ENCODE measurements at regions of chr1 and their contacts with region 1.

Region 1: DNA sequence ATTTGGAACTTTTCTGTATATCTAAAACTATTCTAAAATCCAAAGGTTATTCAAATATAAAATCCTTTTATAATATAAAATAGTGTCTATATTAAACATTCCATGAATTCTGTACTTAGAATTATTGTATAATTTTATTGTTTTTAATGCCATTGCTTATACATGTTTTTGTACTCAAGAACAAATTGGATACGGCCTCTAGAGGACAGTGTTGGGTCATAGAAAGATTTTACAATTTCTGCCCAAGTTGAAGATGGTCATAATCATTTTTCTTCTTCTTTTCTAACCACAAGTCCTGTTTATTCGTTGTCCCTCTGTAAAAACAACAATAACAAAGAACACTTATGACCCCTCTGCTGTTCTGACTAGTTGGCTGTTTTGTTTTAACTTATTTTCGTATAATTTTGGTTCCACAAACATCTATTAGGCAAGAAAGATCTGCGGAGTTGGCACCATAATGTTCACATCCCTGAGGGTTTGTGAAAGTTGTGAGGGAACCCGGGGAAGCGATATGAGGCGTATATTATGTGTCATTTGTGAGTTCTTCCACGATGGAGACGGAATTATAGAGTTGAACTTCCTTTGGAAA is 75.7 kb upstream of the KIF26B start:
- DNase-seq: no peak
- ATAC-seq: no peak
- H3K4me3 Mint-ChIP-seq: no peak overlapping the region
- H3K27ac Mint-ChIP-seq: no peak overlapping the region
- H3K4me1 Mint-ChIP-seq: no peaks in the 10 kb centered on the region
- H3K27me3 Mint-ChIP-seq: no peaks in the 10 kb centered on the region
- CTCF ChIP-seq: no peak

Region 2: DNA sequence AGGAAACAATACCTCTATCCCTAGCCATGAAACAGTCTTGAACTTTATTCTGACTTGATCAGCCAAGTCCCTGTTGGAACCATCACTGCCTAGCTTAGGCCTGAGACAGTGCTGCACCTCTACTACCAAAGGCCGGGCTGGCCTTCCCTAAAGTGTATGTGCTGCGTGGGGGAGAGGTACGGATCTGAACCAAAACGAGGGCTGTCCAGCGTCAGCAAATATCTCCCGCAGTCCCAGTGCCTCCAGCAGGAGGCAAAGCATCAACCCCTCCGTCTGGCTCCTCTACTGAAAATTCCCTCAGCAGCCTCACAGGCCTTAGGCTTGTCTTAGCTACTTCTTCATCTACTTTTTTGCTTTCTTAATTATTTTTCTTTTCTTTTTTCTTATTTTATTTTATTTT is 42.4 kb after region 1 on chr1:
- CTCF ChIA-PET with region 1: no interaction called
- POLR2A ChIA-PET with region 1: no interaction called
- intact Hi-C with region 1: no loop called
- DNase-seq: no peak
- ATAC-seq: no peak
- H3K4me3 Mint-ChIP-seq: no peak overlapping the region
- H3K27ac Mint-ChIP-seq: no peak overlapping the region
- H3K4me1 Mint-ChIP-seq: no peaks in the 10 kb centered on the region
- H3K27me3 Mint-ChIP-seq: no peaks in the 10 kb centered on the region
- CTCF ChIP-seq: no peak

Region 3: DNA sequence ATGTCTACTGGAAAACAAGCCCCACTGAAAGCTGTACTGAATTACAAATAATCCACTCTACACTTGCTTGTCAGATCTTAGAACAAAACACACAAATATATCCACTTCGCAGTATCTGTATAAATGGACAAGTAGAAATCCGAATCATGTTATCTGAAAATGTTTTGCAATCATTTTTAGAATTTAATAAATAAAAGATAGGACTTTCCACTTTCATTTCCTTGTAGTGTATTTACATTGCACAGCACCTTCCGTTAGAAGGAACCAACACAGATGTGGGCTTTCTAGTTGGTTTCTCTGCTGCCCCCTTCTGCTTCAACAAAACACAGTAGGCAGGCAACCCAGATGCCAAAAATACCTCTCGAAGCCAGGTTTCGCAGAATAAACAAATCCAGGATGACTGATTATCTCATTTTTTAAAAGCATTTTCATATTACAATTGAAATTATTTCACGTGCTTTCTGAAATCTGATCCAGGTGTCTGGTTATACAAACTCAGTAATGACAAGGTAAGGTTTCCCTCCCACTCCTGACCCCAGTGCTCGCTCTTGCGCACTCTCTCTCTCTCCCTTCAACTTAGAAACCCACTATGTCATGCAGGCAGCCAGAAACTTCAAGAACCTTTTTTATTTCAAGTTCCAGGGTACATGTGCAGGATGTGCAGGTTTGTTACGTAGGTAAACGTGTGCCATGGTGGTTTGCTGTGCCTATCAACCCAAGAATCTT is 1038.1 kb after region 1 on chr1:
- CTCF ChIA-PET with region 1: no interaction called
- POLR2A ChIA-PET with region 1: no interaction called
- intact Hi-C with region 1: loop called (anchors 5 kb)
- DNase-seq: no peak
- ATAC-seq: peak; percentile 89
- H3K4me3 Mint-ChIP-seq: peak overlapping the region; percentile 38
- H3K27ac Mint-ChIP-seq: peak overlapping the region; percentile 35
- H3K4me1 Mint-ChIP-seq: peaks cover 32% of the 10 kb centered on the region
- H3K27me3 Mint-ChIP-seq: no peaks in the 10 kb centered on the region
- CTCF ChIP-seq: no peak

Measured in activated B cell treated with CpG ODN at 0.5 μM for 24 hours (primary cell).